Heart left ventricle (tissue), 16 donors: ENCODE measurements at regions of chr1 and their contacts with region 1.

Region 1: GRCh38 chr1:204975570-204976235 is 67.3 kb upstream of the CNTN2 start:
- DNase-seq: peak in 3 of 5 donors; percentile 35 to 45 (median 45)
- ATAC-seq: peak; percentile 55 to 80 (median 71)
- H3K4me3 ChIP-seq: no peak overlapping the region
- H3K27ac ChIP-seq: no peak overlapping the region
- H3K4me1 ChIP-seq: peaks cover 0 to 22% (median 0%) of the 10 kb centered on the region in 12 donors
- H3K27me3 ChIP-seq: no peaks in the 10 kb centered on the region
- CTCF ChIP-seq: peak; percentile 70 to 83 (median 76)
- POLR2A ChIP-seq: no peak

Region 2: DNA sequence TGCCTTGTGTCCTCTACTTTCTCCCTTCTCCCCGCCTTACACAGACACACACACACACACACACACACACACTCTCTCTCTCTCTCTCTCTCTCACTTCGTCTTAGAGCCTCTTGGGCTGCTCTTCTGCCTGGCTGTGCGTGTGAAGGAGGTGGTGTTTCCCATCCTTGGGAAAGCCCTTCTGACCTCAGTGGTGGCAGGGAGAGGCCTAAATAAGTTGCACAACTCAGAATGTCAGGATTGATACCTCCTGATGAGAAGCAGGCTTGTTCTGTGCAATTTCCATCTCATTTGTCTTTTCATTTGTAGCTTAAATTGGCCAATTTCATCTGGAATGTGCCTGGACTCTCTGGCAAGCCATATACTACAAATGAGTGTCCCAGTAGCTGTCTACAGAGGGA is 315.2 kb before region 1 on chr1:
- intact Hi-C with region 1: no loop called
- DNase-seq: no peak
- ATAC-seq: no peak
- H3K4me3 ChIP-seq: no peak overlapping the region
- H3K27ac ChIP-seq: peak overlapping the region in 1 of 12 donors; percentile 17
- H3K4me1 ChIP-seq: no peaks in the 10 kb centered on the region
- H3K27me3 ChIP-seq: no peaks in the 10 kb centered on the region
- CTCF ChIP-seq: no peak
- POLR2A ChIP-seq: no peak

Region 3: DNA sequence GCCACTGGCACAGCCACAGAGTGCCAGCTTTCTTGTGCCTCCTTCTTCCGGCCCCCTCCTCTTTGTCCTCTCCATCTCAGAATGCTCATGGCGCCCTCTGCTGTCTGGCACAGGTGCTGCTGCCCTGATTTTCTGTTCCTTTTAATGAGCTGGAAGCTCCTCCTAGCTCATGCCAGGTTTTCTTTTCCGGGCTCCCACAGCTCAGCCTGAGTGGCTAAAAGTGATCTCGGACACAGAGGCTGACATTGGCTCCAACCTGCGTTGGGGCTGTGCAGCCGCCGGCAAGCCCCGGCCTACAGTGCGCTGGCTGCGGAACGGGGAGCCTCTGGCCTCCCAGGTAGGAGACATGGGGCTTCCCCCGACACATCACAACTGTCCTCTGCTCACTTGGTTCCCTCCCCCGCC is 86.0 kb after region 1 on chr1:
- intact Hi-C with region 1: loop called in 1 of 10 experiments (anchors 1 kb)
- DNase-seq: peak in 4 of 5 donors; percentile 50 to 69 (median 64)
- ATAC-seq: peak in 3 of 4 donors; percentile 45 to 79 (median 64)
- H3K4me3 ChIP-seq: no peak overlapping the region
- H3K27ac ChIP-seq: no peak overlapping the region
- H3K4me1 ChIP-seq: peaks cover 0 to 8% (median 0%) of the 10 kb centered on the region in 12 donors
- H3K27me3 ChIP-seq: no peaks in the 10 kb centered on the region
- CTCF ChIP-seq: peak; percentile 71 to 90 (median 84)
- POLR2A ChIP-seq: no peak

Region 4: DNA sequence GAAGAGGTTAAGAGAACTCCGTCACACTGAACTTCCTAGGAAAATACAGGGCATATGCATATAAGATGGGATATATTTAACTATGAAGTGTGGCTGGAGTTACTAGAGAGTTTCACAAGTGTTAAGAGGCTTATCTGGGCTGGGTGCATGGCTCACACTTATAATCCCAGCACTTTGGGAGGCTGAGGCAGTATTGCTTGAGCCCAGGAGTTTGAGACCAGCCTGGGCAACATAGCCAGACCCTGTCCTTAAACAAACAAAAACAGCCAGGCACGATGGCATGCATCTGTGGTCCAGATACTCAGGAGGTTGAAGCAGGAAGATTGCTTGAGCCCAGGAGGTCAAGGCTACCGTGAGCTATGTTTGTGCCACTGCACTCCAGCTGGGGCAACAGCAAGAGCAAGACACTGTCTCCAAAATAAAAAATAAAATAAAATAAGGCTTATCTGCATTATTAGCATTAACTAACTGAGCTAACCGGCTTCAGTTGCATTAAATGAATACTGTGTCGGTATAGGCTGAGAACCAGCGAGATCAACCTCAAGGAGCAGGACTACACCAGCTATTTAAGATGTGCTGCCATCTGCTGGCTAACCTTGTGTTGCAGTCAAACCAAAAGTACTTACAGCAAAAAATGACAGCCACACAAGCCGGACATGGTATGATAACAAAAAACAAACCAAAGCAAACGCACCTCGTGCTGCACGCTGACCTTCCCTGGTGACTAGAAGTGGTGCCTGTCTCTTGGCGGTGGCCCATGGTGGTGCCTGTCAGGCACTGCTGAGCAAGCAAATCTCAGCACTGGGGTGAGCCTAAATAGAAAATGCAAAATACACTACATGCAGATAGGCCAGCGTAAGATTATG is 165.8 kb after region 1 on chr1:
- intact Hi-C with region 1: loop called in 3 of 10 experiments (anchors 5 to 10 kb)
- DNase-seq: peak; percentile 53 to 80 (median 64)
- ATAC-seq: peak; percentile 72 to 85 (median 78)
- H3K4me3 ChIP-seq: peak overlapping the region in 3 of 12 donors; percentile 10 to 13 (median 13)
- H3K27ac ChIP-seq: peak overlapping the region in 1 of 12 donors; percentile 14
- H3K4me1 ChIP-seq: peaks cover 0 to 27% (median 10%) of the 10 kb centered on the region in 12 donors
- H3K27me3 ChIP-seq: no peaks in the 10 kb centered on the region
- CTCF ChIP-seq: peak; percentile 68 to 87 (median 78)
- POLR2A ChIP-seq: no peak

Region 5: GRCh38 chr1:205249651-205250050 is 273.9 kb after region 1 on chr1:
- intact Hi-C with region 1: loop called in 2 of 10 experiments (anchors 5 to 10 kb)
- DNase-seq: no peak
- ATAC-seq: no peak
- H3K4me3 ChIP-seq: no peak overlapping the region
- H3K27ac ChIP-seq: peak overlapping the region in 2 of 12 donors; percentile 37 to 41
- H3K4me1 ChIP-seq: peaks cover 0 to 35% (median 25%) of the 10 kb centered on the region in 12 donors
- H3K27me3 ChIP-seq: no peaks in the 10 kb centered on the region
- CTCF ChIP-seq: no peak
- POLR2A ChIP-seq: no peak